Activated CD8-positive, alpha-beta T cell treated with anti-CD3 and anti-CD28 coated beads, Interleukin-2, amount 10 ng/mL, durations not matched to agents 7 days and 5 days (primary cell): ENCODE measurements at regions of chr6 and their contacts with region 1.

Region 1: GRCh38 chr6:96923400-96923799 is 1.1 kb upstream of the KLHL32 start:
- DNase-seq: no peak
- ATAC-seq: no peak
- H3K4me3 Mint-ChIP-seq: peak overlapping the region; percentile 89
- H3K27ac Mint-ChIP-seq: peak overlapping the region; percentile 7
- H3K4me1 Mint-ChIP-seq: peaks cover 36% of the 10 kb centered on the region
- H3K27me3 Mint-ChIP-seq: peaks cover 22% of the 10 kb centered on the region

Region 2: DNA sequence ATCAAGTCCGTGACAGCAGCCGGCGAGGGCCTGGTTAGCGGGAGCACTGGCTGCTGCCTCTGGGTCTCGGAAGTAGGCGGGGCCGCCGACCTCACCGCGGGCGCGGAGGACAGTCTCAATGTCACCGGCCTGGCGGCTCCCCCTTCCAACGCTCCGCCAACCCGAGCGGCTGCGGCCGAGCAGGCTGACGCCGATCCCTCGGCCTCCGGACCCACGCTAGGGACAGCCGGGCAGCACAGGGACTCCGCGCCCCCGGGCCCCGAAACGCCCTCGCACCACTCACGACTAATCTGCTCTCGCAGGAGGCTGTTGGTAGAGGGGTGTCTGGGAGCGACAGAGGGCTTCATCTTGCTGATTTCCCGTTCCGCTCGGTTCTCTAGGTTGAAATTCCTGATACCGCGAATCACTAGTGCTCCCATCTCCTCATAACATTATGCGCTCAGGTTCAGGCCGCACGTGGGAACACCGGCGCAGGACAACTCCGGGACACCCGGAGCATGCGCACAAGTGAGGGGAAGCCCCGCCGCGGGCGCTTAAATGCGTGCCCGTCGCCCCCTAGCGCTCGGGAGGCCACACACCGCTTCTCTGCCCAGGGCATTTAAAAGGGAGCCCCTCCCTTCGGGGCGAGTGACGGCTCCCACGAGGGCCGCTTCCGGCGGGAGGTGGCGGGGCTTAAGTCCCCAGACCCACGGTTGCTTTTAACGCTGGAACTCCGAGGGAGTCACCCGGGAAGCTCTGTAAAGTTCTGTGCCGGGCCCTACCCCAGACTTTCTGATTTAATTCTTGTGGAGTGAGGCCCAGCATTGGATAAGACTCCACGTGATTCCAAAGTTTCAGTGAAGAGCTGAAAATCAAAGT is 25.8 kb before region 1 on chr6 and contains the start of gene NDUFAF4:
- CTCF ChIA-PET with region 1: interaction called, 15 read pairs
- POLR2A ChIA-PET with region 1: interaction called, 4 read pairs
- DNase-seq: peak; percentile 96
- ATAC-seq: peak; percentile 93
- H3K4me3 Mint-ChIP-seq: peak within 1 kb of the TSS; percentile 84
- H3K27ac Mint-ChIP-seq: peak within 1 kb of the TSS; percentile 92
- H3K4me1 Mint-ChIP-seq: peaks cover 34% of the 10 kb centered on the region
- H3K27me3 Mint-ChIP-seq: peaks cover 12% of the 10 kb centered on the region
- total RNA-seq, gene NDUFAF4: 42.3 to 42.5 TPM

Region 3: DNA sequence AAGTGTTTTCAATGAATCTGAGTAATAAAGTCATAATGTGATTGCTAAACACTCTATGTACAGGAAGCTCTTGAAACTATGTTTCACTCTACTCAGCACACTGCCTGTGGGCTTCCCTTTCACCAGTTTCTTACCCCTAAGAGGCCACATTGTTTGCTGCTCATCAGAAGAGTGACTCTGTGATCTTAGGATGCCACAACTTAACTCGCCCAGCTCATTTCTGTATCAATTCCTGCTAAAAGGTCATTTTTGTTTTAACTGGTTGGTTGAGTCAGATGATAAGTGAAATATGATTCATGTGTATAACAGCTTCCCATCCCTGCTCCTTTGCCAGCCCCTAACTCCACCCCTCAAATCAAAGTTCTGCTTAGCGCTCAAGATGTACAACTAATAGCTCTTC is 15.9 kb before region 1 on chr6:
- CTCF ChIA-PET with region 1: interaction called, 33 read pairs
- POLR2A ChIA-PET with region 1: interaction called, 5 read pairs
- DNase-seq: peak; percentile 35
- ATAC-seq: peak; percentile 71
- H3K4me3 Mint-ChIP-seq: no peak overlapping the region
- H3K27ac Mint-ChIP-seq: no peak overlapping the region
- H3K4me1 Mint-ChIP-seq: peaks cover 8% of the 10 kb centered on the region
- H3K27me3 Mint-ChIP-seq: peaks cover 24% of the 10 kb centered on the region